Activated B cell treated with CpG ODN at 0.5 μM for 24 hours (primary cell): ENCODE measurements at regions of chr1 and their contacts with region 1.

Region 1: GRCh38 chr1:17606826-17607440 is 67.4 kb downstream of the ARHGEF10L start:
- DNase-seq: peak; percentile 26
- ATAC-seq: no peak
- H3K4me3 Mint-ChIP-seq: no peak overlapping the region
- H3K27ac Mint-ChIP-seq: no peak overlapping the region
- H3K4me1 Mint-ChIP-seq: no peaks in the 10 kb centered on the region
- H3K27me3 Mint-ChIP-seq: no peaks in the 10 kb centered on the region
- CTCF ChIP-seq: no peak

Region 2: DNA sequence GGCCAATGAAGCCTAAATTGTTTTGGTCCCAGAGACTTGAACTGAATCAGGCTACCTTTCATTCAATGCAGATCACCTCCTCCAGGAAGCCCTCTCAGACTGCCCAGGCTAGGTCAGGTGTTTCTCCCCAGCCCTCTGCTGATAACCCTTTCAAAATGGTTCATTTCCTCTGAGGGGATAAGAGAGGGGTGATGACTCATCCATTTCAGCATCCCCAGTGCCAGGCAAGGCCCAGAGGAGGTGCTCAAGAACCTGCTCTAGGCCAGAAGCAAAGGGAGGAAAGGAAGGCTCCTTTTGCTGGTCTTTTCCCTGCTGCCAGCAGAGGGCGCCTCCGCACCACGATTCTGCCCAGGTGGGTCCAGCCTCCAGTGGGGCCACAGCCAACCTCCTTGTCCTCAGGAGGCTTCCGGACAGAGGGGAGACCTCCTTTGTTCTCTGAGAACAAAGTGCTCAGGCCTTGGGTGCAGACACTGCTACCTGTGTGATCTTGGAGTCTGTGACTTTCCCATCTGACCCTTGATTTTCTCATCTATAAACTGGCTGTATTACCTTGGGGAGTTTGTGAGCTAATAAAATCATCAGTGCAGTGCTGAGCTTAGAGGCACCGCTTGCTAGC is 112.7 kb before region 1 on chr1:
- CTCF ChIA-PET with region 1: interaction called, 21 read pairs
- POLR2A ChIA-PET with region 1: no interaction called
- intact Hi-C with region 1: loop called (anchors 2 kb)
- DNase-seq: peak; percentile 49
- ATAC-seq: peak; percentile 85
- H3K4me3 Mint-ChIP-seq: no peak overlapping the region
- H3K27ac Mint-ChIP-seq: no peak overlapping the region
- H3K4me1 Mint-ChIP-seq: no peaks in the 10 kb centered on the region
- H3K27me3 Mint-ChIP-seq: no peaks in the 10 kb centered on the region
- CTCF ChIP-seq: no peak

Region 3: GRCh38 chr1:17502326-17502778 is 104.6 kb before region 1 on chr1:
- CTCF ChIA-PET with region 1: interaction called, 26 read pairs
- POLR2A ChIA-PET with region 1: no interaction called
- intact Hi-C with region 1: loop called (anchors 1 kb)
- DNase-seq: peak; percentile 50
- ATAC-seq: peak; percentile 70
- H3K4me3 Mint-ChIP-seq: no peak overlapping the region
- H3K27ac Mint-ChIP-seq: no peak overlapping the region
- H3K4me1 Mint-ChIP-seq: no peaks in the 10 kb centered on the region
- H3K27me3 Mint-ChIP-seq: peaks cover 4% of the 10 kb centered on the region
- CTCF ChIP-seq: no peak